ENCODE measurements at regions of chr2 and their contacts with region 1.

Region 1: DNA sequence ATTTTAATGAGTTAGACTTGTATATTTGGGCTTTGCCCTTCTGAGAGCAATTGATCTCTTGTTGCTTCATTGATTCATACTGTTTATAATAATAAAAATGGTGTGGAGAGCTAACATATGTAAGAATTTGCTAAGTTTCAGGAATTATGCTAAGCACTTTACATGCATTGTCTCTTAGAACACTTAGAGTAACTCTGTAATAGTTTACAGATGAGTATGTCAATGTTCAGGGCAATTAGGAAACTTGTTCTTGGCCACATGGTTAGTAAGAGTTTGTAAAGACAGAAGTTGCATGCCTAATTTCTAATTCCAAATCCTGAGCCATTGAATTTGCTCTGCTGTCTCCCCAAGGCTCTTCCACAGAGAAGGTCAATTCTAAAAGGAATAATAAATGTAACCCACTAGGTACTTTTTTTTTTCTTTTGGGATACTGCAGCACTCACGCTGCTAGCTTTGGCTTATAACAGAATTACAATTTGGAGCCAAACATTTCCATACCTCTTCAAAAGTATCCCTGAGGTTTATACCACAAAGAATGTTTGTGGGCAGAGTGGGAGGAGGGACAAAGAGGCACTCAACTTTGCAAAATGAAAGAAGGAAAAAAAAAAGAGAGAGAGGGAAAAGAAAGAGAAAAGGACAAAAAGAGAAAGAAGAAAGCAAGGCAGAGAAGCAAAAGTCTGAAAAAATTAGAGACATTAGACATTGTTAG is 232.4 kb downstream of the CALCRL start:
- DNase-seq: no peak
- ATAC-seq: no peak
- H3K4me3 ChIP-seq: no peak overlapping the region
- H3K4me3 Mint-ChIP-seq: no peak overlapping the region
- H3K27ac ChIP-seq: no peak overlapping the region
- H3K27ac Mint-ChIP-seq: no peak overlapping the region
- H3K4me1 ChIP-seq: no peaks in the 10 kb centered on the region
- H3K4me1 Mint-ChIP-seq: no peaks in the 10 kb centered on the region
- H3K27me3 ChIP-seq: no peaks in the 10 kb centered on the region
- H3K27me3 Mint-ChIP-seq: no peaks in the 10 kb centered on the region
- CTCF ChIP-seq: no peak

Region 2: GRCh38 chr2:186399082-186399644 is 816.5 kb before region 1 on chr2:
- CTCF ChIA-PET with region 1: no interaction called
- POLR2A ChIA-PET with region 1: no interaction called
- intact Hi-C with region 1: no loop called
- DNase-seq: no peak
- ATAC-seq: no peak
- H3K4me3 ChIP-seq: no peak overlapping the region
- H3K4me3 Mint-ChIP-seq: no peak overlapping the region
- H3K27ac ChIP-seq: no peak overlapping the region
- H3K27ac Mint-ChIP-seq: no peak overlapping the region
- H3K4me1 ChIP-seq: no peaks in the 10 kb centered on the region
- H3K4me1 Mint-ChIP-seq: no peaks in the 10 kb centered on the region
- H3K27me3 ChIP-seq: no peaks in the 10 kb centered on the region
- H3K27me3 Mint-ChIP-seq: no peaks in the 10 kb centered on the region
- CTCF ChIP-seq: no peak

Region 3: GRCh38 chr2:187168720-187169713 is 46.7 kb before region 1 on chr2:
- CTCF ChIA-PET with region 1: no interaction called
- POLR2A ChIA-PET with region 1: no interaction called
- intact Hi-C with region 1: loop called in 1 of 2 experiments (anchors 5 kb)
- DNase-seq: no peak
- ATAC-seq: no peak
- H3K4me3 ChIP-seq: no peak overlapping the region
- H3K4me3 Mint-ChIP-seq: no peak overlapping the region
- H3K27ac ChIP-seq: no peak overlapping the region
- H3K27ac Mint-ChIP-seq: no peak overlapping the region
- H3K4me1 ChIP-seq: no peaks in the 10 kb centered on the region
- H3K4me1 Mint-ChIP-seq: no peaks in the 10 kb centered on the region
- H3K27me3 ChIP-seq: no peaks in the 10 kb centered on the region
- H3K27me3 Mint-ChIP-seq: no peaks in the 10 kb centered on the region
- CTCF ChIP-seq: no peak